ENCODE measurements at regions of chr7 and their contacts with region 1.

Region 1: GRCh38 chr7:69663911-69664832 is 65.9 kb downstream of the AUTS2 start:
- DNase-seq: no peak
- ATAC-seq: peak; percentile 81
- H3K4me3 ChIP-seq: no peak overlapping the region
- H3K27ac ChIP-seq: peak overlapping the region; percentile 6; the same call in 1 of the 2 replicates
- H3K4me1 ChIP-seq: peaks cover 33% of the 10 kb centered on the region
- H3K27me3 ChIP-seq: no peaks in the 10 kb centered on the region
- CTCF ChIP-seq: no peak
- EP300 ChIP-seq: peak in 1 of 2 experiments; percentile 13; a peak in 1 of 4 replicates
- POLR2A ChIP-seq: no peak
- RAD21 ChIP-seq: no peak

Region 2: DNA sequence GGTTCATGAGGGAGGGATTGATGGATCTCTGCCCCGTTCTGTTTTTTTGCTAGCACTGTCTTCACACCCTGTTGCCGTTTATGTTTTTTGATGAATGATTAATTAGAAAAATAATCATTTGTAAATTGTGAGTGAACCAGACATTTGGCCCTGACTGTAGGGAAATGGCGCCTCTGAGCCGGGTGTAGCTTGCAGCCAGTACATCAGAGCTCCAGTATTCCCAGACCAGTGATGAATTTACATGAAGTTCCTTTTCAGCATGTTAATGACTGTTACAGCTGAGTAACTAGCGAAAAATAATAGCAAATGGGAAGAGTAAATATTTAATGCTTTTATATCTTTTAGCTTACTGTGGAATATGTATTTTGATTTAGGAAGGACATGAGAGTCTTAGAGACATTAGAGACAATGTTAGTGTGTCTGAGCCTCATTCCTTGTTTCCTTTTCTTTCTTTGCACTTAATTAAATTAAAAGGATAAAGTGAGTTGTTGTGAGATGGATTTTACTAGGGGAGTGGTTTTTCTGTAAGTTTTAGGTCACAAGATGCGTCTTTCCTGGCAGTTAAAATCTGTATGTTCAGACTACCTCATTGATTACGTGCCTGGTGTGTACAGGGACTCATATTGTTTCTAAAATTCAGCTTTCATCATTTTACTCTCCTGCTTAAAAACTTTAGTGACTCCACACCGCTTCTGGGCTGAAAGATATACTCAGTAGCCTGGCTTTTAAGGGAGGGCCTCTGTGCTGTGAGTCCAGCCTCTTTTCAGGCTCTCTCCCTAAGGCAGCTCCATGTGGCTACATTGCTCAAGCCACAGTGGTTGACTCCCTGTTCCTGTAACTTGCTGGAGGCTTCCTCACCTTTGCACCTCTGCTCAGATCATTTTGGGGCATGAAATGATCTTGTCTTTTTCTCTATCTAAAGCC is 20.5 kb after region 1 on chr7:
- CTCF ChIA-PET with region 1: interaction called, 3 read pairs
- POLR2A ChIA-PET with region 1: interaction called, 6 read pairs
- RAD21 ChIA-PET with region 1: interaction called, 13 read pairs
- SMC1A ChIA-PET with region 1: interaction called, 89 read pairs
- in situ Hi-C with region 1: no loop called
- intact Hi-C with region 1: no loop called
- DNase-seq: no peak
- ATAC-seq: peak; percentile 15
- H3K4me3 ChIP-seq: no peak overlapping the region
- H3K27ac ChIP-seq: peak overlapping the region; percentile 1; the same call in 1 of the 2 replicates
- H3K4me1 ChIP-seq: peaks cover 20% of the 10 kb centered on the region
- H3K27me3 ChIP-seq: no peaks in the 10 kb centered on the region
- CTCF ChIP-seq: no peak
- EP300 ChIP-seq: no peak
- POLR2A ChIP-seq: no peak
- RAD21 ChIP-seq: no peak

Region 3: DNA sequence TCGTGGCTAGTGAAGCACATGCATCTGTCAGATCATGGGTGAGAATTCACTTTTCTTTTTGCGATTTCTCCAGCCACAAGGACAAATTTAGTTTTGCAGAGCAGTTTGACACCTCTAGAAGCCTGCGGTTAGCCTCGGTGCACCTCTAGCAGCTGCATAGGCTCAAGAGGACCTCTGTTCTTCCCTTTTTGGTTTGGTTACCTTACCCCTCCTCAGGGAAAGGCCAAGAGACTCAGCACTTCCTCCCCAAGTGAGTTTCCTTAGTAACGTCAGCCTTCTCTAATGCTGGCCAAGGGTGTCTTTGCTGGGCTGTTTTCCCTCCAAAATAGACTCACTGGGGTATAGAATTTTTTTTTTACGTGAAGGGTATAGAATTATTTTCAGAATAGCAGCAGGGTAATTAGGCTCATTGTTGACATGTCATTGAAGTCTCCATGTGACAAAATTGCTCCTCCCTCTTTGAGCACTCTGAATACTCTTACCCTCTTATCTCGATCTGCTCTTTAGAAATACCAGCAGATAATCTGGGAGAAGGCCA is 32.0 kb after region 1 on chr7:
- CTCF ChIA-PET with region 1: interaction called, 3 read pairs
- POLR2A ChIA-PET with region 1: interaction called, 3 read pairs
- RAD21 ChIA-PET with region 1: interaction called, 4 read pairs
- SMC1A ChIA-PET with region 1: interaction called, 22 read pairs
- in situ Hi-C with region 1: no loop called
- intact Hi-C with region 1: no loop called
- DNase-seq: peak; percentile 88
- ATAC-seq: peak; percentile 82
- H3K4me3 ChIP-seq: no peak overlapping the region; the same call in 1 of the 2 replicates
- H3K27ac ChIP-seq: peak overlapping the region; percentile 41
- H3K4me1 ChIP-seq: peaks cover 59% of the 10 kb centered on the region
- H3K27me3 ChIP-seq: no peaks in the 10 kb centered on the region
- CTCF ChIP-seq: no peak
- EP300 ChIP-seq: peak; percentile 91 to 97
- POLR2A ChIP-seq: no peak
- RAD21 ChIP-seq: peak; percentile 7; the same call in 1 of the 2 replicates

Region 4: DNA sequence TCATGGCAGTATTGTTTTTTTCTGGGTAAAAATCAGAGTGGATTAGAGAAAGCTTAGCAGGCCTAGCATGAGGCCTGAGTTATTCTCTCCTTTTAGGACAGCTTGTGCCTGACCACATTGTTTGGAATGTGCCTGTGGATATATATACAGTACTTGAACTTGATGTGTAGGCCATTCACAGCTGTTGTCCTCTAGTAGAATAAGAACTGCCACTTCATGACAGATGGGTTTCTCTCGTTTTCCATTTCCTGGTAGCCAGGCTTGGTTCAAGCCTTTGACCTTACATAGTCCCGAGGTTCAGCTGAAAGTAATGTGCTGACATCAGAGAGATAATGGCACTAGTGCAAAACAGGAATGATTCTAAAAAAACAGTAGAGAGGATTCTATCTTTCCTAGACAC is 408.0 kb after region 1 on chr7:
- CTCF ChIA-PET with region 1: no interaction called
- POLR2A ChIA-PET with region 1: no interaction called
- RAD21 ChIA-PET with region 1: no interaction called
- SMC1A ChIA-PET with region 1: no interaction called
- in situ Hi-C with region 1: no loop called
- intact Hi-C with region 1: no loop called
- DNase-seq: no peak
- ATAC-seq: peak; percentile 56
- H3K4me3 ChIP-seq: no peak overlapping the region
- H3K27ac ChIP-seq: no peak overlapping the region
- H3K4me1 ChIP-seq: peaks cover 5% of the 10 kb centered on the region
- H3K27me3 ChIP-seq: no peaks in the 10 kb centered on the region
- CTCF ChIP-seq: no peak
- EP300 ChIP-seq: no peak
- POLR2A ChIP-seq: no peak
- RAD21 ChIP-seq: no peak

Region 5: GRCh38 chr7:71477441-71477840 is 1813.3 kb after region 1 on chr7:
- CTCF ChIA-PET with region 1: no interaction called
- POLR2A ChIA-PET with region 1: no interaction called
- RAD21 ChIA-PET with region 1: no interaction called
- SMC1A ChIA-PET with region 1: no interaction called
- in situ Hi-C with region 1: no loop called
- intact Hi-C with region 1: no loop called
- DNase-seq: no peak
- ATAC-seq: no peak
- H3K4me3 ChIP-seq: no peak overlapping the region
- H3K27ac ChIP-seq: no peak overlapping the region
- H3K4me1 ChIP-seq: no peaks in the 10 kb centered on the region
- H3K27me3 ChIP-seq: no peaks in the 10 kb centered on the region
- CTCF ChIP-seq: no peak
- EP300 ChIP-seq: no peak
- POLR2A ChIP-seq: no peak
- RAD21 ChIP-seq: no peak